Panc1 (cell line): ENCODE measurements at regions of chr5 and their contacts with region 1.

Region 1: GRCh38 chr5:15105796-15106393 is 234.3 kb upstream of the ANKH start:
- DNase-seq: peak; percentile 41
- ATAC-seq: peak; percentile 80
- H3K4me3 ChIP-seq: no peak overlapping the region
- H3K27ac ChIP-seq: no peak overlapping the region
- H3K4me1 ChIP-seq: no peaks in the 10 kb centered on the region
- H3K27me3 ChIP-seq: 0 out of 2 replicates have a peak, but pooled peaks cover 2% of the 10 kb centered on the region
- CTCF ChIP-seq: peak; percentile 80

Region 2: GRCh38 chr5:15794052-15794985 is 688.4 kb after region 1 on chr5:
- CTCF ChIA-PET with region 1: no interaction called
- POLR2A ChIA-PET with region 1: no interaction called
- in situ Hi-C with region 1: no loop called
- intact Hi-C with region 1: loop called (anchors 5 kb)
- DNase-seq: no peak
- ATAC-seq: no peak
- H3K4me3 ChIP-seq: no peak overlapping the region
- H3K27ac ChIP-seq: no peak overlapping the region
- H3K4me1 ChIP-seq: no peaks in the 10 kb centered on the region
- H3K27me3 ChIP-seq: no peaks in the 10 kb centered on the region
- CTCF ChIP-seq: peak; percentile 23; the same call in 1 of the 2 replicates